ENCODE measurements at regions of chrX and their contacts with region 1.

Region 1: DNA sequence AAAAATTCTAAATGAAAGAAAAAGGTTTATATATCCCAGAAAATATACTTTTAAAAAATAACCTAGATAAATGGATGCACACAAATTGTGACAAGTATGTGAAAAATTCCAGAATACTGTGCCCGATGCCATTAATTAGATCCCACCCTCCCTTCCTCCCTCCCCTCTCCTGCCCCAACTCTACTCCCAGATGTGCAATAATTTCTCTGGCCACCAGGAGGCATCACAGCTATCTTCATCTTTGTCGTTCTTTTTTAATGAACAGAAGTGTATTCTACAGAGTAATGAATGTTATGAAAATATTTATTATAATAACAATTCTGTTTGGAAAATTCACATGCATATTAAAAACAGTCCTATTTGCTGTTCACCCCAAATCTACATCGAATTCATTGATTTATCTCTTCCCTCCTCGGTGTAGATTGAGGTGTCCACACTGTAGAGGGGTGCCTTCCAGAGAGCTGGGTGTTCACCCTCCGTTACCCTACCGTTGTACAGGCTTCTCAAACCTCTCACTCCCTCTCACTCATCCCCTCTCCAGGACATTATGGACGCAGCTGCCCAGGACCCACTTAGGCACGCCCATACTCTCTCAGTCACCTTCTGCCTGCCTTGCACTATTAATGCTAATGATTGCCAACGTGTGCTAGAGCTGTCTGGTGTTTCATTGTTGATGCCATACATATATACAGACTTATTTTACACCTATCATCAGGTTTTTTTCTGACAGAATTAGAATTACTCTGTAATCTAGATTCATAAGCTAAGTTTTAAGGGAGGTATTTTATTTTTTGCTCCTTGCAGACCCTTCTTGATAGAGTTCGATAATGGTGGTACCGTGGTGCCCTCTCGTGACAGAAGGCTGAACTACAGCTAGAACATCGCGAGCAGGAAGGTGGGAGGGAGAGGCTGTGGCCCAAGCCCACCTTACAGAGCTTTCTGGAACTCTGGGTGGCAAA is 14.1 kb downstream of the RAB40AL start:
- DNase-seq: no peak
- ATAC-seq: no peak

Region 2: DNA sequence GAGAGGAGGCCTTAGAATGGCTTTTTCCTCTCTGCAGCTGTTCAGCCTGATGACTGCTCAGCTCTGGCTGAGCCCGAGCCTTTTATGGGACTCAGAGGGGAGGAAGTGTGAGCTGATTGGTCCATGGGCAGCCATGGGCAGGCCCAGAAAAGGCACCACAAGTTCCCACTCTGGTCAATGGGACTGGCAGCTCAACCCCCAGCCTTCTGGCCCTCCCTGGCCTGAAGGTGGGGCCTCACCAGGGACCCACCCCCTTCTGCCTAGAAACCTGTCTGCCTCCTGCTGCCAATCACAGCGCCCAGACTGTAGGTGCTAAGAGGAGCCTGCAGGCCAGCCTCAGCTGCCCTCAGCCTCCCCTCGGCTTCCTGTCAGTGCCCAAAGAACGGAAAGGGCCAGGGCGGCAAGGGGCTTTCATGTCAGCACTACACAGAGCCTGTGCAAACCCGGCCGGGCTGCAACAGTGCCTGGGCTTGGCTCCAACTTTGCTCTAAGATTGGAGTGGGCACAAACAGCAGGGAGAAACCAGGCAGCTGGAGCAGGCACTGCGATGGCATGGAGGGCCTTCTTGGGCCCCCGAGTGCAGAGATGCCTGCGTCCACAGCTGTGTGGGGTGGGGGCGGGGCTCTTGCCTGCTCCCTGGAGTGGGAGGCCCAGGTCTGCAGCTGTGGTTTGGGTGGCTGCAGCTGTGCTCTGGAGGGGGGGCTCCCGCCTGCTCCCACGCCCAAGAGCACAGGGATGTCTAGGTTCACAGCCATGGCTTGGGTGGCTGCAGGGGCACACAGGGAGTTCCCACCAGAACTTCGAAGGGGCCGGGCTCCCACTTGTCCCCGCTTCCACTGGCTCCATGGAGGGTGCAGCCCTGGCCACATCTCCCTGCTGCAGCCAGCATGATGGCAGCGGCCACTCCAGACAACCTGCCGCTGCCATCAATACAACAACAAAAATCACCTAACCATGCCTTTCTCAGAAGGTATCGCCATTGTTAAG is 611.6 kb before region 1 on chrX:
- intact Hi-C with region 1: no loop called
- DNase-seq: peak; percentile 33
- ATAC-seq: no peak

Region 3: DNA sequence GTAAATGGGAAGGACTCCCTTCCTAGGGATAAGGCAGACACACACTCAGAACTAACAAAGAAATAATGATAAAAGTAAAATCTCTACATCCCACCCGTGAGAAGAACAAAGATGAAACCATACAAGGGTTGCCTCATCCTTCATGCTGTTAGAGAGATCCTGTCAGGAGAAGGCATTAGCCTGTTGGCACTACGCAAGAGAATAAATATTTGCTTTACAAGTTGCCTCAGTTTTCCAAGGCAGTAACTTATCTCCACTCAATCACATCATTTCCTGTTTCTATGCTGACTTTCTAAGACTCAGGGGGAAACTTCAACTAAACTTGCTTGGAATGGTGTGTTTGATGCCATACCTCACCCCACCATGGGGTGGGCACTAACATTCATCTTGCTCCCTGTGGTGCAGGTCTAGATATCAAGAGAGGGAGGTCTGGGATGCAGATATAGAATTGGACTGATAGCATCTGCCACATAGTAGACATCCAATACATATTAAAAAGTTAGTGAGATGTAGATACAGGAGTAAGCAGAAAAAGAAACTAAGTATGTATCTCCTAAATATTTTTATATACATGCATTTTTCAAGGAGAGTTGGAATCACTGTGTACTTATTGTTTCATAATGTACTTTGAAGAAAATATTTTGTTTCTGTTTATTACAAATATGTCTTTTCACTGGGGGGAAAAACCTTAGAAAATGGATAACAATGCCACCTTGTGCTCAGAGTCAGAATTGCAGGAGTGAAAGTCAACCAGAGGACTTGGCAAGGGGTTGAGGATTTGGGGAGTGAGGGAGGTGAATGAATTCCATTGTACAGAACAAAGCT is 206.5 kb after region 1 on chrX:
- intact Hi-C with region 1: loop called (anchors 10 kb)
- DNase-seq: no peak
- ATAC-seq: no peak

Region 4: DNA sequence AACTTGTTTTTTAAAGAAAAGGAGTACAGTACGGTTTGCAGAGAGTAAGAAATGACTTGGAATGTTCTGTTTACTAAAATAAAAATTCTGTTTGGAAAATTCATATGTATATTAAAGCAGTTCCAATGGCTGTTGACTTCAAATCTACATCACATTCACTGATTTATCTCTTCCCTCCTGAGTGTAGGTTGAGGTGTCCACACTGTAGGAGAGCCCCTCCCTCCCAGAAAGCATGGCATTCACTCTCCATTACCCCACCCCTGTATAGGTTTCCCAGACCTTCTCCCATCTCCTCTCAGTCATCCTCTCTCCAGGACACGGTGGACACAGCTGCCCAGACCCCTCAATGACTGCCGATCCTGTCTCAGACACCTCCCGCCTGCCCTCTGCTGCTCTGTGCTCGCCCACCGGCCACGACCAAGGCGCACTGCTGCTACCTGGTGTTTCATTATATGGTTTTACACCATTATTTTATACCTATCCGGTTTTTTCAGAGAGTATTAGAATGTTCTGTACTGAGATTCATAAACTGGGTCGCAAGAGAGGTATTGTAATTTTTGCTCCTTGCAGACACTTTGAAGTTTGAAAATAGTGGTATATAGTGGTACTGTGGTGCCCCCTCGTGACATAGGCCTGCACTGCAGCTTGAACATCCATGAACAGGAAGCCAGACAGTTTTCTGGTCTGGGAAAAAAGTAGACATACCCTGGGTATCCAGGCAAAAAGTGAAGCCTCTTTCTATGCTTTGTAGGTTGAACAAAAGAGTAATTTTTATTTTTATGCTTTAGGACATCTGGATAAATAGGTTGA is 225.0 kb after region 1 on chrX:
- intact Hi-C with region 1: loop called (anchors 5 kb)
- DNase-seq: peak; percentile 56
- ATAC-seq: no peak